Common myeloid progenitor, CD34-positive (primary cell): ENCODE measurements at regions of chr2 and their contacts with region 1.

Region 1: GRCh38 chr2:11129598-11130449 is 25.4 kb upstream of the SLC66A3 start:
- DNase-seq: peak; percentile 69 to 79 (median 74)
- H3K4me3 ChIP-seq: peak overlapping the region; percentile 32 to 75 (median 59)
- H3K27ac ChIP-seq: peak overlapping the region in 1 of 2 experiments; percentile 5
- H3K4me1 ChIP-seq: peaks cover 3 to 51% (median 34%) of the 10 kb centered on the region in 4 experiments
- H3K27me3 ChIP-seq: peaks cover 0 to 9% (median 5%) of the 10 kb centered on the region in 5 experiments

Region 2: DNA sequence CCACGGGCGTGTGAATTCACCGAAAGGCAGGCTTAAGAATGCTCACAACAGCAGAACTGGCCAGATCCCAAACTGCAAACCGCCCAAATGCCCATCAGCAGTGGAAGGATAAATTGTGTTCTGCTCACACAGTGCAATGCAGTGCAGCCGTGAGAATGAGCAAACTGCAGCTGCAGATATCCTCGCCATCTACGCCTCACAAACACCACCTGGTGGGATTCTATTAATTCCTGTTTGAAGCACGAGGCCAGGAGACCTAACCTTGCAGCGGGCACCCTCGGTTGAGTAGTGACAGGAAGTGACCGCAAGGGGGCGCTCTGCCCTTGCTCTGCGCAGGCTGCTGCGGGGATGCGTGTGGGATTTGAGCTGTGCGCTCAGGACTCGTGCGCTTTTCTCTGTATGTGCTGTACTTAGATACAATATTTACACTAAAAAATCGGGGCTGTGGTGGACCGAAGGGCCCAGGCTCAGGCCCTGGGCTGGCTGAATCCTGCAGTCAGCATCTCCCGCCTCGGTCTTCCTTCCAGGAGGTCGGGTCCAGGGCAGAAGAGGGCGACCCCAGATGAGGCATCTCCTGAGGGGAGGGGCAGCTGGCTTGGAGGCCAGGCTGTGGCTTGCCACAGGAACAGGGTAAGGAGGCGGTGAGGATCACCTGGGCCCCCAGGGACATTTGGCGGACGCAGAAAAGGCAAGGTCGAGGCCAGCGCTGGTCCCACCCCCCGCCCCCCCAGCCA is 297.5 kb before region 1 on chr2:
- CTCF ChIA-PET with region 1: interaction called, 29 read pairs
- POLR2A ChIA-PET with region 1: interaction called, 3 read pairs
- DNase-seq: peak; percentile 83 to 92 (median 90)
- H3K4me3 ChIP-seq: no peak overlapping the region
- H3K27ac ChIP-seq: no peak overlapping the region
- H3K4me1 ChIP-seq: peaks cover 0 to 10% (median 5%) of the 10 kb centered on the region in 4 experiments
- H3K27me3 ChIP-seq: peaks cover 0 to 35% (median 9%) of the 10 kb centered on the region in 5 experiments

Region 3: GRCh38 chr2:11154923-11155380 is 25.1 kb after region 1 on chr2:
- CTCF ChIA-PET with region 1: interaction called, 13 read pairs
- POLR2A ChIA-PET with region 1: interaction called, 3 read pairs
- DNase-seq: peak; percentile 96 to 98 (median 97)
- H3K4me3 ChIP-seq: peak overlapping the region; percentile 44 to 79 (median 72)
- H3K27ac ChIP-seq: peak overlapping the region in 1 of 2 experiments; percentile 61
- H3K4me1 ChIP-seq: peaks cover 0 to 17% (median 12%) of the 10 kb centered on the region in 4 experiments
- H3K27me3 ChIP-seq: no peaks in the 10 kb centered on the region

Region 4: DNA sequence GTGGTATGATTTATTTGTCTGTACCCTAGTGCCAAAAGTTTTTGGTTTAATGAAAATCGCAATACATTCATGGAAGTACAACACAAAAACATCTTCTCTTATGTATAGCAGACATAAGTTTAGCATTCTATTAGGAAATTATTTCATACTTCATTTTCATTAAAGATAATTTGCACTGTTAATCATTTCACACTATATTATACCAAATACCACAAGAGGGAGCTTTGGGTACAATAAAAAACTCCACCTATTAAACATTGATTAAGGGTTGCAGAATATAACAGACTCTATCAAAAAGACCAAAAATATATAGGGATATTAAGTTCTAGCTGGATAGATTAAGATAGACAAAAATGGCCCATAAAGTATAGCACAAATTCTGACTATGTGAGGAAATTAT is 104.5 kb after region 1 on chr2:
- CTCF ChIA-PET with region 1: interaction called, 18 read pairs
- POLR2A ChIA-PET with region 1: no interaction called
- DNase-seq: peak; percentile 15 to 42 (median 30)
- H3K4me3 ChIP-seq: no peak overlapping the region
- H3K27ac ChIP-seq: no peak overlapping the region
- H3K4me1 ChIP-seq: peaks cover 0 to 4% (median 0%) of the 10 kb centered on the region in 4 experiments
- H3K27me3 ChIP-seq: no peaks in the 10 kb centered on the region

Region 5: DNA sequence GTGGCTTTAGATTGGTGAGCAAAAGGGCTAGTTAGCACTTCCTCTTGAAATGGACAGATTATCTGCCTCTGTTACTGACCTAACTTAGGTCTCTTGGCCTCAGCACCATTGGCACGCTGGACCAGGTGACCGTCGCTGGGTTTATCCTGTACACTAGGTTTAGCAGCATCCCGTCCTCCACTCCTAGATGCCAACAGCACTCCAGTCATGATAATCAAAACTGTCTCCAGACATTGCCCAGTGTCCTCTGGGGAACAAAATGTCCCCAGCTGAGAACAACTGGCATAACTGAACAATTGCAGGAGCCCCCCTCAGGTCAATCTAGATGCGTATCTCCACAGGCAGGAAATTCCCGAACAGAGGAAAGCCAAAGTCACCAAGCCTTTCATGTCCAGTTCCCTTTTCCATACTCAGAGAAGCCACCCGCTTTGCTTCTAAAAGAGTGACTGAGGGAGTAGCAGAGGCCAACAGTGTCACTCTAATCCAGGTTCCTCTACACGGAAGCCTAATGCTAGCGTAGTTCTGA is 308.8 kb after region 1 on chr2:
- CTCF ChIA-PET with region 1: interaction called, 11 read pairs
- POLR2A ChIA-PET with region 1: no interaction called
- DNase-seq: no peak
- H3K4me3 ChIP-seq: no peak overlapping the region
- H3K27ac ChIP-seq: no peak overlapping the region
- H3K4me1 ChIP-seq: no peaks in the 10 kb centered on the region
- H3K27me3 ChIP-seq: no peaks in the 10 kb centered on the region

Region 6: DNA sequence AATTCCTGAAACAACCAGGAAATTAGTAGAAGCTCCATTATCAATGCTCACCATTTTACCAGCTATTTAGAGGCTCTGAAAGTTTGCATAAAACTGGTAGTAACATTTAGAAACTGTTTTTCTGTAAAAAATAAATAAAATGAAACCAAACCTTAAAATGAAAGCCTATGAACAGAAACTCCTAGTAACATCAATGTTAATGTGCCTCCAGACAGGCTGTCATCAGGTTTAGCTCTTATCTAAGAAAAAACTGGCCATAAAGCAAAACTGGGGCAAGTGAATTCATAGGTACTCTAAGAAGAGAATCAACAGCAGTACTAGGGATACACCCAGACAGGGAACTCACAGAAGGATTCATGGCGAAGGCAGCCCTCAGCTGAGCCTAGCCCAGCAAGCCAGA is 328.1 kb after region 1 on chr2:
- CTCF ChIA-PET with region 1: interaction called, 13 read pairs
- POLR2A ChIA-PET with region 1: no interaction called
- DNase-seq: no peak
- H3K4me3 ChIP-seq: no peak overlapping the region
- H3K27ac ChIP-seq: no peak overlapping the region
- H3K4me1 ChIP-seq: peaks cover 0 to 15% (median 5%) of the 10 kb centered on the region in 4 experiments
- H3K27me3 ChIP-seq: no peaks in the 10 kb centered on the region